B cell (primary cell): ENCODE measurements at regions of chr18 and their contacts with region 1.

Region 1: DNA sequence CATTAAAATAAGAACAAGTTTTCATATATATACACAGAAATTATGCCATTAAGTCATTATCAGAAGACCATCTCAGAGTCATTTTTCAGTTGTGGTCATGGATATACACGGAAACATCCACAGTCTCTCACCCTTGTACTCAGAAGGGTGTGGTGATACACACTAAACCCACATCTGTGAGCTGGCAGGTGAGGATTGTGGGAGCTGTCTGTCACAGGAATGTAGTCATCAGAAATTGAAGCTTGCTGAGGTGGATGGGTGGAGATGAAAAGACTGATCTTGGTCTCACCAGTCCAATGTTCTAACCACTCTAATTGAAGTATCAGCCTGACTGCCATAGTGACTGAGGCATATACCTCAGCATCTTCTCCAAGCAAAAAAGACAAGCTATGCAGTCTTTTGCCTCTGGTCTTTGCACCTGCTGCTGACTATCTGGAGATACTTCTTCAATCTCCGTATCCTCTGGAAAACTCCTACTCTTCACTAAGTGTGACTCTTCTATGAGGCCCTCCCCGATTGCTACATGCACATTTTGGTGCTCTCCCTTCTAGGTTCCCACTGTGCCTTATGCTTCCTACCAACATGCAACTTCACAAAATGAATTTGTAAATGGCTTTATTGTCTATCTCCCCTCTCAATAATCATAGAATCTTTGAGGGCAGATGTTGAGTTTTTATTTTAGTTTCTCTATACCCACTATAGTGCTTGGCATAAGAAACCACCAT is 232.8 kb downstream of the DYM start:
- DNase-seq: no peak
- ATAC-seq: no peak
- H3K4me3 ChIP-seq: no peak overlapping the region
- H3K4me3 Mint-ChIP-seq: no peak overlapping the region
- H3K27ac ChIP-seq: no peak overlapping the region
- H3K27ac Mint-ChIP-seq: no peak overlapping the region
- H3K4me1 ChIP-seq: no peaks in the 10 kb centered on the region
- H3K4me1 Mint-ChIP-seq: no peaks in the 10 kb centered on the region
- H3K27me3 ChIP-seq: no peaks in the 10 kb centered on the region
- H3K27me3 Mint-ChIP-seq: no peaks in the 10 kb centered on the region
- CTCF ChIP-seq: no peak

Region 2: GRCh38 chr18:49206717-49207116 is 20.9 kb before region 1 on chr18:
- CTCF ChIA-PET with region 1: no interaction called
- POLR2A ChIA-PET with region 1: interaction called, 10 read pairs
- intact Hi-C with region 1: no loop called
- DNase-seq: no peak
- ATAC-seq: no peak
- H3K4me3 ChIP-seq: no peak overlapping the region
- H3K4me3 Mint-ChIP-seq: no peak overlapping the region
- H3K27ac ChIP-seq: no peak overlapping the region
- H3K27ac Mint-ChIP-seq: no peak overlapping the region
- H3K4me1 ChIP-seq: no peaks in the 10 kb centered on the region
- H3K4me1 Mint-ChIP-seq: peaks cover 5% of the 10 kb centered on the region
- H3K27me3 ChIP-seq: no peaks in the 10 kb centered on the region
- H3K27me3 Mint-ChIP-seq: no peaks in the 10 kb centered on the region
- CTCF ChIP-seq: no peak

Region 3: DNA sequence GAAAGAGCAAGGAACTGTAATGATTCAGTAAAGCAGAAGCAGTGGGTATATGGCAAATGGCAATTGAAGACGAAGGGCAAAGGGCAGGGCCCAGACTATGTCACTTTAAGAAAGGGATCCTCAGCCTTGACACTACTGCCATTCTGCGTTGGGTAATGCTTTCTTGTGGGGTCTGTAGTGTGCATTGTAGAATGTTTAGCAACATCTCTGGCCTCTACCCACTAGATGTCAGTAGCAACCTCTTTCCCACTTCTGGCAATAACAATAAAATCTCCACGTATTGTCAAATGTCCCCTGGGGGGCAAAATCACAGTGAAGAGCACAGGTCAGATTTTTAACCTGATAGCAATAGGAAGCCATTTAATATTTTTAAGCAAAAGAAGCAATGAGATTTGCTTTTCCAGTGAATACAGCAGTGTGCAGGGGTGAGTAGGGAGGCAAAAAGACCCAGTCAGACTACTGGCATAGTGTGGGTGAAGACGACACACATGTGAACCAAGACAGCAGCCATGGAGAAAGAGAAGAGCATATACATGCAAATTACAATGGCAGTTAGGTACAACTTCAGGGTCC is 23.3 kb after region 1 on chr18:
- CTCF ChIA-PET with region 1: no interaction called
- POLR2A ChIA-PET with region 1: no interaction called
- intact Hi-C with region 1: no loop called
- DNase-seq: no peak
- ATAC-seq: no peak
- H3K4me3 ChIP-seq: no peak overlapping the region
- H3K4me3 Mint-ChIP-seq: no peak overlapping the region
- H3K27ac ChIP-seq: no peak overlapping the region
- H3K27ac Mint-ChIP-seq: no peak overlapping the region
- H3K4me1 ChIP-seq: no peaks in the 10 kb centered on the region
- H3K4me1 Mint-ChIP-seq: no peaks in the 10 kb centered on the region
- H3K27me3 ChIP-seq: no peaks in the 10 kb centered on the region
- H3K27me3 Mint-ChIP-seq: no peaks in the 10 kb centered on the region
- CTCF ChIP-seq: no peak